CD4-positive, alpha-beta memory T cell (primary cell): ENCODE measurements at regions of chrX and their contacts with region 1.

Region 1: DNA sequence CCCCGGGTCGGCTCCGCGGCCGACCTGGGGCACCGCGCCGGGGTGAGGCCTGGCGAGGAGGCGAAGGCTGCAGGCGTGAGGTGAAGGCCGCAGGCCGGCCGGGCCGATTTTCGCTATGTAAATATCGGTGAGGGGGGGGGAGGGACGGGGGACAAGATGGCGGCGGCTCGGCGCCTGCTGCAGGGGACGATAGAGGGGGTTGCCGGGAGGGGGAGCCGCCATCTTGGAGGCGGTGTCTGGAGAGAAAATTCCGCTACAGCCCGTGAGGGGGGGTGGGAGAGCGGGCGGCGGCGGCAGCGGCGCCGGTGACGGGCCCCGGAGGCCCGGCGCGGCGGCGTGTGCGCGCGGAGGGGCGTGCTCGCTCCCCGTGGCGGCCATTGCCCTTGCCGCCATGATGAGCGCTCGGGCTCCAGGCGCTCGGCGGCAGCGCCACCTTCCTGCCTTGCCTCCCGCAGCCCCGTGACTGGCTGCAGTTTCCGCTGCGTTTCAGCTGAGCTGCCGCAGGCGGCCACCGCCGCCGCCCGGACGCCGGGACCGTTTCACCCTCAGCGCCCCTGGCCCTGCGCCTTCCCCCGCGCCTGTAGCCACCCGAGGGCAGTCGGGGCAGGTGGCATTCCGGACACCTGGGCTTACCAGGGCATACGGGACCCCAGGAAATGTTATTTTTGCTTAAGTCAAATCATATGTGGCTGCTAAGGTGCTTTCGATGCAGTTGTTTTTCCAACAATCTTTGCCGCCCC is 692 bp downstream of the ZFX start:
- DNase-seq: peak; percentile 89 to 95 (median 93)
- H3K4me3 ChIP-seq: peak overlapping the region; percentile 64 to 65
- H3K4me3 Mint-ChIP-seq: peak overlapping the region; percentile 88 to 95 (median 92)
- H3K27ac ChIP-seq: peak overlapping the region; percentile 83
- H3K27ac Mint-ChIP-seq: peak overlapping the region; percentile 91 to 96 (median 94)
- H3K4me1 ChIP-seq: peaks cover 78% of the 10 kb centered on the region
- H3K4me1 Mint-ChIP-seq: peaks cover 39 to 77% (median 61%) of the 10 kb centered on the region in 4 donors
- H3K27me3 ChIP-seq: no peaks in the 10 kb centered on the region
- H3K27me3 Mint-ChIP-seq: no peaks in the 10 kb centered on the region

Region 2: DNA sequence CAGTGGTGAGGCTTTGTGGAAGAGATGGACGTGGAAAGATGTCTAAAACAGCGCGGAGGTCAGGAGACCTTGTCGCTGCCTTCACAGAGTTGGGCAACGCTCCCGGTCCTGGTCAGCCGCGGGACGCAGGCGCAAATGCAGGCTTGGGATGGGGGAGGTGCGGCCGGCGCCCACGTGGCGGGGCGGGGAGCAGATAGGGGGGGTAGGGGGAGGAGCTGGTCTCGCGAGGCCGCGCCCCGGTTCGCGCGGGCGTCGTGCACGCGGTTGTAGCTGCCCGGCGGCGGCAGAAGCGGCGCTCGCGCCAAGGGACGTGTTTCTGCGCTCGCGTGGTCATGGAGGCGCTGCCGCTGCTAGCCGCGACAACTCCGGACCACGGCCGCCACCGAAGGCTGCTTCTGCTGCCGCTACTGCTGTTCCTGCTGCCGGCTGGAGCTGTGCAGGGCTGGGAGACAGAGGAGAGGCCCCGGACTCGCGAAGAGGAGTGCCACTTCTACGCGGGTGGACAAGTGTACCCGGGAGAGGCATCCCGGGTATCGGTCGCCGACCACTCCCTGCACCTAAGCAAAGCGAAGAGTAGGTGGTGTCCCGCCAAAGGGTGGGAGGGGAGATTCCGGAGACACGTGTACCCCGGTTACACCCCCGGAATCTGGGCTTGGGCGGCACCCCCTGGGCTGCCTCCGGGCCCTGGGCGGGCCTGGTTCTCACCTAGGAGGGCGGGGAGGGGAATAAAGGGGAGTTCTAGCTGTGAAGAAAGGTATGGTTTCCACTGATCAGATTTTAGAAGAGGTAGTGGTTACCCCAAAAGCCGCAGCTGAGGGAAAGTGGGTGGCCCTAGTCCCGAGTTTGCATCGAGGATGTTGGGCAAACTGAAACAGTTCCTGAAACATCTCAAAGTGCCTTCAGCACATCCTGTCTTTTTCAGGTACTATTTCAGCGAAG is 482.7 kb before region 1 on chrX and contains the start of gene PRDX4:
- CTCF ChIA-PET with region 1: no interaction called
- POLR2A ChIA-PET with region 1: no interaction called
- intact Hi-C with region 1: loop called (anchors 5 kb)
- DNase-seq: peak; percentile 60 to 75 (median 67)
- H3K4me3 ChIP-seq: peak within 1 kb of the TSS in 1 of 2 donors; percentile 52
- H3K4me3 Mint-ChIP-seq: peak within 1 kb of the TSS; percentile 86 to 94 (median 88)
- H3K27ac ChIP-seq: peak within 1 kb of the TSS; percentile 85
- H3K27ac Mint-ChIP-seq: peak within 1 kb of the TSS; percentile 85 to 94 (median 91)
- H3K4me1 ChIP-seq: peaks cover 17% of the 10 kb centered on the region
- H3K4me1 Mint-ChIP-seq: peaks cover 14 to 29% (median 17%) of the 10 kb centered on the region in 4 donors
- H3K27me3 ChIP-seq: no peaks in the 10 kb centered on the region
- H3K27me3 Mint-ChIP-seq: no peaks in the 10 kb centered on the region
- total RNA-seq, gene PRDX4: 13.1 to 13.4 TPM

Region 3: GRCh38 chrX:24024819-24025740 is 125.1 kb before region 1 on chrX:
- CTCF ChIA-PET with region 1: no interaction called
- POLR2A ChIA-PET with region 1: interaction called, 8 read pairs
- intact Hi-C with region 1: loop called (anchors 2 kb)
- DNase-seq: peak; percentile 77 to 82 (median 80)
- H3K4me3 ChIP-seq: peak overlapping the region; percentile 61 to 62
- H3K4me3 Mint-ChIP-seq: peak overlapping the region; percentile 62 to 94 (median 88)
- H3K27ac ChIP-seq: peak overlapping the region; percentile 75
- H3K27ac Mint-ChIP-seq: peak overlapping the region in 5 of 7 donors; percentile 59 to 92 (median 75)
- H3K4me1 ChIP-seq: peaks cover 29% of the 10 kb centered on the region
- H3K4me1 Mint-ChIP-seq: peaks cover 14 to 29% (median 22%) of the 10 kb centered on the region in 4 donors
- H3K27me3 ChIP-seq: no peaks in the 10 kb centered on the region
- H3K27me3 Mint-ChIP-seq: no peaks in the 10 kb centered on the region

Region 4: GRCh38 chrX:24063488-24063887 is 86.7 kb before region 1 on chrX:
- CTCF ChIA-PET with region 1: no interaction called
- POLR2A ChIA-PET with region 1: no interaction called
- intact Hi-C with region 1: no loop called
- DNase-seq: no peak
- H3K4me3 ChIP-seq: no peak overlapping the region
- H3K4me3 Mint-ChIP-seq: no peak overlapping the region
- H3K27ac ChIP-seq: no peak overlapping the region
- H3K27ac Mint-ChIP-seq: no peak overlapping the region
- H3K4me1 ChIP-seq: no peaks in the 10 kb centered on the region
- H3K4me1 Mint-ChIP-seq: peaks cover 0 to 4% (median 1%) of the 10 kb centered on the region in 4 donors
- H3K27me3 ChIP-seq: no peaks in the 10 kb centered on the region
- H3K27me3 Mint-ChIP-seq: no peaks in the 10 kb centered on the region

Region 5: DNA sequence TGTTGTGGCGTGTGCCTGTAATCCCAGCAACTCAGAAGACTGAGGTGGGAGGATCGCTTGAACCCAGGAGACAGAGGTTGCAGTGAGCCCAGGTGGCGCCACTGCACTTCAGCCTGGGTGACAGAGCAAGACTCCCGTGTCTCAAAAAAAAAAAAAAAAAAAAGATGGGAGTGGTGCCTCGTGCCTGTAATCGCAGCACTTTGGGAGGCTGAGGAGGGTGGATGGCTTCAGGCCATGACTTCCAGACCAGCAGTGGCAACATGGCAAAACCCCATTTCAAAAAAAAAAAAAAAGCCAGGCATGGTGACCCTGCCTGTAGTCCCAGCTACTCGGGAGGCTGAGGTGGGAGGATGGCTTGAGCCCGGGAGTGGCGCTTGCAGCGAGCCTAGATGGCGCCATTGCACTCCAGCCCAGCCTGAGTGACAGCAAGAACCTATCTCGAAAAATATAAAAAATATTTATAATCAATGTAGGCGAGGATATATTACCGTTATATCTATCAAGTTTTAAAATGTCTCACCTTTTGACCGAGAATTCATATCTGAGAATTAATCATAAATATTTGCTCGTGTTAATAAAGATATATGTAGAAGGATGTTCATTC is 68.5 kb before region 1 on chrX:
- CTCF ChIA-PET with region 1: interaction called, 5 read pairs
- POLR2A ChIA-PET with region 1: no interaction called
- intact Hi-C with region 1: loop called (anchors 1 kb)
- DNase-seq: peak; percentile 44 to 55 (median 53)
- H3K4me3 ChIP-seq: no peak overlapping the region
- H3K4me3 Mint-ChIP-seq: peak overlapping the region in 2 of 8 donors; percentile 36 to 39
- H3K27ac ChIP-seq: no peak overlapping the region
- H3K27ac Mint-ChIP-seq: no peak overlapping the region
- H3K4me1 ChIP-seq: no peaks in the 10 kb centered on the region
- H3K4me1 Mint-ChIP-seq: peaks cover 0 to 10% (median 5%) of the 10 kb centered on the region in 4 donors
- H3K27me3 ChIP-seq: no peaks in the 10 kb centered on the region
- H3K27me3 Mint-ChIP-seq: no peaks in the 10 kb centered on the region

Region 6: GRCh38 chrX:24464836-24465531 is 314.8 kb after region 1 on chrX and contains the start of gene PDK3:
- CTCF ChIA-PET with region 1: no interaction called
- POLR2A ChIA-PET with region 1: no interaction called
- intact Hi-C with region 1: loop called (anchors 5 kb)
- DNase-seq: peak; percentile 89 to 91 (median 91)
- H3K4me3 ChIP-seq: peak within 1 kb of the TSS; percentile 44 to 62
- H3K4me3 Mint-ChIP-seq: peak within 1 kb of the TSS; percentile 81 to 90 (median 87)
- H3K27ac ChIP-seq: peak within 1 kb of the TSS; percentile 87
- H3K27ac Mint-ChIP-seq: peak within 1 kb of the TSS; percentile 89 to 97 (median 92)
- H3K4me1 ChIP-seq: peaks cover 40% of the 10 kb centered on the region
- H3K4me1 Mint-ChIP-seq: peaks cover 16 to 42% (median 28%) of the 10 kb centered on the region in 4 donors
- H3K27me3 ChIP-seq: no peaks in the 10 kb centered on the region
- H3K27me3 Mint-ChIP-seq: no peaks in the 10 kb centered on the region
- total RNA-seq, gene PDK3: 30.3 to 31.1 TPM